ENCODE measurements at regions of chr17 and their contacts with region 1.

Region 1: GRCh38 chr17:8248751-8249607 is at the start of gene PFAS:
- DNase-seq: peak; percentile 87 to 98 (median 94)
- ATAC-seq: peak; percentile 35
- H3K4me3 ChIP-seq: peak within 1 kb of the TSS; percentile 75
- H3K4me3 Mint-ChIP-seq: peak within 1 kb of the TSS; percentile 98
- H3K27ac ChIP-seq: peak within 1 kb of the TSS; percentile 99 to 100
- H3K27ac Mint-ChIP-seq: peak within 1 kb of the TSS; percentile 100
- H3K4me1 ChIP-seq: peaks cover 53% of the 10 kb centered on the region
- H3K4me1 Mint-ChIP-seq: peaks cover 62% of the 10 kb centered on the region
- H3K27me3 ChIP-seq: no peaks in the 10 kb centered on the region
- H3K27me3 Mint-ChIP-seq: peaks cover 5% of the 10 kb centered on the region
- CTCF ChIP-seq: no peak
- total RNA-seq, gene PFAS: 22.3 to 23.0 TPM

Region 2: DNA sequence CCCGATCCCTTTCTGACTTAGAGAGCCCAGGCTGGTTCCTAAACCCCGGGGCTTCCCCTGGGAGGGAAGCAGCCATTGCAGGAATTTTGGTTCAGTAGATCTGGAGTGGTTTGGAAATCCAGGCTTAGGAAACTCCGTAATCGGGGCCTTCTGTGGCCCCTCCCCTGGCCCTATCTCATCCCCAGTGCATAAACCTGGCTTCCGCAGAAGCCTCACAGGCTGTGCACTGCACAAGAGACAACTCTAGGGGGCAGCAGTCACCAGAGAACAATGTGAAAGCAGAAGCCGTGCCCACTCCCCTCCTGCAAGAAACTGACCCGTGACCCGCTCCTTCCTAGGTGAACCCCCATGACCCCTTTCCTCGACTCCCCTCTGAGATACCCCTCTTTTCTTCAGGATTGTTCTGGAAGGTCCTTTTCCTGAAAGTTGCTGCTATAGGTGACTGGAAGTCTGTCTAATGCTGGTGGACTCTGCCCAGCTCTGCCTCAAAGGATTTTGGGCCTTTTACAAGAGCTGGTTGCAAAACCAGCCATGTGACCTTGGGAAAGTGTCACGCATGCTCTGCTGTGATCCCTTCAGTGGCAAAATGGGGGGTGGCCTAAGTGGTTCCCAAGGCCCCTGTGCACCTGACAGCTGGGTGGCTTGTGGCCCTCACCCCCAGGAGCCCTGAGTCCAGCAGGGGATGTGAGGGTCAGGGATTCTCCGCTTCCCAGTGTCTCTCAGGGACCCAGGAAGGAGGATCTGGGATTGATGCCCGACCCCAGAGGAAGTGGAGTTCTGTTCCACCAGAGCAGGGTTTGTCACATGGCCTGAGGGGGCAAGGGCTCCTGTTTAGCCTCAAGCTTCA is 232.1 kb before region 1 on chr17:
- CTCF ChIA-PET with region 1: no interaction called
- POLR2A ChIA-PET with region 1: no interaction called
- intact Hi-C with region 1: no loop called
- DNase-seq: peak in 13 of 14 experiments; percentile 16 to 67 (median 35)
- ATAC-seq: peak; percentile 93
- H3K4me3 ChIP-seq: peak overlapping the region; percentile 54
- H3K4me3 Mint-ChIP-seq: peak overlapping the region; percentile 87
- H3K27ac ChIP-seq: no peak overlapping the region
- H3K27ac Mint-ChIP-seq: no peak overlapping the region
- H3K4me1 ChIP-seq: peaks cover 16% of the 10 kb centered on the region
- H3K4me1 Mint-ChIP-seq: peaks cover 6% of the 10 kb centered on the region
- H3K27me3 ChIP-seq: peaks cover 4 to 16% of the 10 kb centered on the region in 2 experiments
- H3K27me3 Mint-ChIP-seq: peaks cover 42% of the 10 kb centered on the region
- CTCF ChIP-seq: peak; percentile 59

Region 3: DNA sequence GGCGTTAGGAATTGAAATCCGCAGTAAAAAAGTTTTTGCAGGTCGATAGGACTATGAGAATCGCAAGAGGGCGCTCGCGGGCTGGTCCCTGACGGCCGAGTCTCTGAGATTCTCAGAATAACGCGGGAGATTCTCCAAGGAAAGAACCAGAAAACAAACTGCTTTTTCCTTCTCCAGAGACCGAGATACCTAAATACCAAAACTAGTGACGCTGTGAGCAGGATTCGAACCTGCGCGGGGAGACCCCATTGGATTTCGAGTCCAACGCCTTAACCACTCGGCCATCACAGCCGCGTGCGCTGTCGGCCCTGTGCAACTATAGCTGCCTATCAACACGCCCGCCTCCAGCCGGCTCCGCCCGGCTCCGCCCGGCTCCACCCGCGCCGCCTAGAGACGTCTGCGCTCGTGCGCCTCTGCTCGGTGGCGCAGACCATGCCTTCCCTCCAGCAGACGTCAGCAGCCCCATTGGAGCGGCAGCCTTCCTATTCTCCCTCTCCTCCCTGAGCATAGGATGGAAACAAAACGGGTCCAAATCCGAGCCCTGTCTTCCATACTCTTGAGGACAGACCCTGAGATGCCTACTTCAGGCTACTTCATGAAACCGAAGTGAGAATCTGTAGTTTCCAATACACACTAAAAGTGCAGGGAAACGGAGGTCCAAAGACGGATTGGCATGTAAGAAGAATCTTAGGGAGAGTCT is 110.2 kb before region 1 on chr17:
- CTCF ChIA-PET with region 1: interaction called, 10 read pairs
- POLR2A ChIA-PET with region 1: interaction called, 25 read pairs
- intact Hi-C with region 1: no loop called
- DNase-seq: peak; percentile 91 to 97 (median 95)
- ATAC-seq: peak; percentile 86
- H3K4me3 ChIP-seq: peak overlapping the region; percentile 71
- H3K4me3 Mint-ChIP-seq: no peak overlapping the region
- H3K27ac ChIP-seq: peak overlapping the region; percentile 71 to 91
- H3K27ac Mint-ChIP-seq: no peak overlapping the region
- H3K4me1 ChIP-seq: peaks cover 26% of the 10 kb centered on the region
- H3K4me1 Mint-ChIP-seq: peaks cover 2% of the 10 kb centered on the region
- H3K27me3 ChIP-seq: no peaks in the 10 kb centered on the region
- H3K27me3 Mint-ChIP-seq: peaks cover 2% of the 10 kb centered on the region
- CTCF ChIP-seq: peak; percentile 75

Region 4: DNA sequence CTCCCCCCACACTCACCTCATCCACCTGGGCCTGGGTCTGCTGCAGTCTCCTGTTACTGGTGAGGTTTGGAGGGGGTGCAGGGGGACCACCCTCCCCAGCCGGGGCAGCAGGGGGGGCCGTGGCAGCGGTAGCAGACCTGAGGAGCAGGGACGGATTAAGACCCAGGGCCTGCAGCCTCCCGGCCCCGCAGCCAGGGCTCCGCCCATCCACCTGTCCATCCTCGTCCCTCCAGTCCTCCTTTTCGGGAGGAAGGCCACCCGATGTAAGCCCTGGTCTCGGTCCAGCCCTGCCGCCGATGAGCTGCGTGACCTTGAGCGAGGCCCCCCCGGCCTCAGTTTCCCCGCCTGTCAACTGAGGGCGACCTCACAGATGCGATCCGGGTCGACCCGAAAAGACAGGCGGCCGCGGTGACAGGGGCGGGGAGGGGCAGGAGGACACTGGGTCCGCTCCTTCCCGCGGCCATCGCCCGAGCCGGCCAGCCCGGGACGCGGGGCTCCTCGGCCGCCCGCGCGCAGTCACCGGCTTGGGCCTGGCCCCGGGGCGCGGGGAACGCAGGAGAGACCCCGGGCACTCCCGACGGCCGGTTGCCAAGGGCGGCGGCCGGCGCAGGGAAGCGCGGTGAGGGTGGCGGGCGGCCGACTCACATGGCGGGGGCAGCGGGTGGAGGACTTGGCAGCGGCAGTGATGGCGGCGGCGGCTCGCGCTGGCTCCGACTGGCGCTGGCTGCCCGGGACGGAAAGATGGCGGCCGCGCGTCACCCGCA is 86.6 kb before region 1 on chr17 and contains the start of gene VAMP2:
- CTCF ChIA-PET with region 1: no interaction called
- POLR2A ChIA-PET with region 1: interaction called, 31 read pairs
- intact Hi-C with region 1: loop called in 1 of 2 experiments (anchors 5 kb)
- DNase-seq: peak; percentile 71 to 95 (median 83)
- ATAC-seq: peak; percentile 47
- H3K4me3 ChIP-seq: peak within 1 kb of the TSS; percentile 86
- H3K4me3 Mint-ChIP-seq: peak within 1 kb of the TSS; percentile 95
- H3K27ac ChIP-seq: peak within 1 kb of the TSS; percentile 94 to 96
- H3K27ac Mint-ChIP-seq: no peak within 1 kb of the TSS
- H3K4me1 ChIP-seq: peaks cover 72% of the 10 kb centered on the region
- H3K4me1 Mint-ChIP-seq: peaks cover 67% of the 10 kb centered on the region
- H3K27me3 ChIP-seq: no peaks in the 10 kb centered on the region
- H3K27me3 Mint-ChIP-seq: no peaks in the 10 kb centered on the region
- CTCF ChIP-seq: no peak
- total RNA-seq, gene VAMP2: 351 to 366 TPM

Region 5: GRCh38 chr17:8209909-8210760 is 38.8 kb before region 1 on chr17 and contains the start of gene AURKB:
- CTCF ChIA-PET with region 1: interaction called, 5 read pairs
- POLR2A ChIA-PET with region 1: interaction called, 9 read pairs
- intact Hi-C with region 1: loop called (anchors 5 kb)
- DNase-seq: peak; percentile 84 to 97 (median 90)
- ATAC-seq: peak; percentile 100
- H3K4me3 ChIP-seq: peak within 1 kb of the TSS; percentile 76
- H3K4me3 Mint-ChIP-seq: peak within 1 kb of the TSS; percentile 90
- H3K27ac ChIP-seq: peak within 1 kb of the TSS; percentile 40 to 50
- H3K27ac Mint-ChIP-seq: peak within 1 kb of the TSS; percentile 27
- H3K4me1 ChIP-seq: peaks cover 16% of the 10 kb centered on the region
- H3K4me1 Mint-ChIP-seq: peaks cover 19% of the 10 kb centered on the region
- H3K27me3 ChIP-seq: no peaks in the 10 kb centered on the region
- H3K27me3 Mint-ChIP-seq: no peaks in the 10 kb centered on the region
- CTCF ChIP-seq: no peak
- total RNA-seq, gene AURKB: 0.56 to 1.4 TPM

Region 6: GRCh38 chr17:8294814-8295316 is 45.9 kb after region 1 on chr17:
- CTCF ChIA-PET with region 1: interaction called, 12 read pairs
- POLR2A ChIA-PET with region 1: interaction called, 117 read pairs
- intact Hi-C with region 1: loop called (anchors 1 to 2 kb)
- DNase-seq: no peak
- ATAC-seq: no peak
- H3K4me3 ChIP-seq: peak overlapping the region; percentile 72
- H3K4me3 Mint-ChIP-seq: peak overlapping the region; percentile 95
- H3K27ac ChIP-seq: peak overlapping the region; percentile 48 to 73
- H3K27ac Mint-ChIP-seq: peak overlapping the region; percentile 79
- H3K4me1 ChIP-seq: peaks cover 26% of the 10 kb centered on the region
- H3K4me1 Mint-ChIP-seq: peaks cover 39% of the 10 kb centered on the region
- H3K27me3 ChIP-seq: no peaks in the 10 kb centered on the region
- H3K27me3 Mint-ChIP-seq: no peaks in the 10 kb centered on the region
- CTCF ChIP-seq: no peak

Region 7: DNA sequence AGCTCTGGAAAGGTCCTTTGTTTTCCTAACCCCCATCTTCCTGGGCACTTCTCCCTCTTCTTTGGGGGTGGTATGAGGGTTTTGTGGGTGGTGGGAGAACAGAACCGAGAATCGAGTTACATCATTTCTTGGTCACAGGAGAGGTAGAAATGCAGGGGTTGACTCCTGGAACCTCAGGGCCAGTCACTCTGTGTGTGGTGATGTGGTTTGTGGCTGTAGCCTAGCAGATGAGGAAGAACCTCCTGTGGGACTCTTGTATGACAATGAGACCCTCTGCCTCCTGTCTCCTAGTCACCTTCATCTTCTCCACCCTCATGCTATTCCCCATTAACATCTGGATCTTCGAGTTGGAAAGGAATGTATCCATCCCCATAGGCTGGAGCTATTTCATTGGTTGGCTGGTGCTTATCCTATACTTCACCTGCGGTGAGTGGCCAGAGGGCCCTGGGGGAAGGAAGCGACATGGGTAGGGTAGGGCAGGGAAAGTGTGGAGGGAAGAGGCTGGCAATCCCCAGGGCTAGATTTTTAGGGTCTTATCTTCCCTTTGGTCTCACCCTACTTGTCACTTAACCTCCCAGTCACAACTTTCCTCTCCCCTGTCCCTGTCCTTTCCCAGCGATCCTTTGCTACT is 96.2 kb after region 1 on chr17:
- CTCF ChIA-PET with region 1: no interaction called
- POLR2A ChIA-PET with region 1: no interaction called
- intact Hi-C with region 1: no loop called
- DNase-seq: no peak
- ATAC-seq: no peak
- H3K4me3 ChIP-seq: no peak overlapping the region
- H3K4me3 Mint-ChIP-seq: no peak overlapping the region
- H3K27ac ChIP-seq: no peak overlapping the region
- H3K27ac Mint-ChIP-seq: no peak overlapping the region
- H3K4me1 ChIP-seq: no peaks in the 10 kb centered on the region
- H3K4me1 Mint-ChIP-seq: no peaks in the 10 kb centered on the region
- H3K27me3 ChIP-seq: peaks cover 0 to 10% of the 10 kb centered on the region in 2 experiments
- H3K27me3 Mint-ChIP-seq: peaks cover 27% of the 10 kb centered on the region
- CTCF ChIP-seq: no peak